Naive thymus-derived CD4-positive, alpha-beta T cell (primary cell): ENCODE measurements at regions of chr1 and their contacts with region 1.

Region 1: GRCh38 chr1:45011837-45012638 is at the start of gene UROD:
- DNase-seq: peak; percentile 61 to 94 (median 89)
- ATAC-seq: peak; percentile 93
- H3K4me3 ChIP-seq: peak within 1 kb of the TSS; percentile 65
- H3K4me3 Mint-ChIP-seq: peak within 1 kb of the TSS; percentile 90 to 100 (median 93)
- H3K27ac ChIP-seq: peak within 1 kb of the TSS; percentile 81
- H3K27ac Mint-ChIP-seq: peak within 1 kb of the TSS; percentile 89 to 98 (median 94)
- H3K4me1 ChIP-seq: peaks cover 28 to 30% of the 10 kb centered on the region in 2 donors
- H3K4me1 Mint-ChIP-seq: peaks cover 29 to 64% (median 57%) of the 10 kb centered on the region in 7 donors
- H3K27me3 ChIP-seq: no peaks in the 10 kb centered on the region
- H3K27me3 Mint-ChIP-seq: no peaks in the 10 kb centered on the region
- total RNA-seq, gene UROD: 40.7 to 72.8 (median 58.1) TPM

Region 2: DNA sequence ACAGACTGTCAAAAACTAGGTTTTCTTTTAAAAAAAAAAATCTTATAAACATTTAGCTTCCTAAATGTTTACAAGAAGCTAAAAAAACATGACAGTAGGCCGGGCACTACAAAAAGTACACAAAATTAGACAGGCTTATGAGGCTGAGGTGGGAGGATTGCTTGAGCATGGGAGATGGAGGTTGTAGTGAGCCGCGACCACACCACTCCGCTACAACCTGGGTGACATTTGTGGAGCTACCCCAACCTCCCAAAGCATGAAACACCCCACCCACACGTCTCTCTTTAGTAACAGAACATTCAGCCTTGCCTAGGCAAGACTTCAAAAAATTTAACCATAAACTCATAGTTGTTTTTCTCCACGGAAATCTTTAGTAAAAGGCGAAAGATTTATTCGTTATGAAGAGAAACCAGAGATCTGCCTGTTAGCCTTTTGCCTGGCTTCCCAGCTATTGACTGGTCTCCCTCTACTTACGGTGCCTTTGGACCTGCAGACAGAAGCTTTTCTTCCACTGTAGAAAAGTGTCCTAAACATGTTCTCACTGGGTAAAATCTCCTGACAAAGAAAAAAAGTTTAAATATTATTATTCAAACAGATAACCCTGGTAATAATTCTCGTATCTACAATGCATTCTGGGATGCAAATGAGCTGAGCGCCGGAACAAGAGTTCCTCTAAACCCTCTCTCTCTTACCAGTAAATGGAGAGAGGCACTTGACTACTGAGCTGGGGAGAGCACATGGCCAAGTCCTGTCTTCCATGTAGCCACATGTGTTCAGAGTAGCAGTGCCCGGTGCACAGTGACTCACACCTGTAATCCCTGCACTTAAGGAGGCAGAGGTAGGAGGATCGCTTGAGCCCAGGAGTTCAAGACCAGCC is 290.3 kb before region 1 on chr1:
- CTCF ChIA-PET with region 1: no interaction called
- POLR2A ChIA-PET with region 1: interaction called, 23 read pairs
- intact Hi-C with region 1: no loop called
- DNase-seq: peak in 8 of 9 donors; percentile 62 to 84 (median 72)
- ATAC-seq: peak; percentile 92
- H3K4me3 ChIP-seq: peak overlapping the region; percentile 15
- H3K4me3 Mint-ChIP-seq: peak overlapping the region; percentile 53 to 87 (median 80)
- H3K27ac ChIP-seq: peak overlapping the region; percentile 64
- H3K27ac Mint-ChIP-seq: peak overlapping the region; percentile 74 to 98 (median 95)
- H3K4me1 ChIP-seq: peaks cover 26 to 73% of the 10 kb centered on the region in 2 donors
- H3K4me1 Mint-ChIP-seq: peaks cover 52 to 85% (median 74%) of the 10 kb centered on the region in 7 donors
- H3K27me3 ChIP-seq: no peaks in the 10 kb centered on the region
- H3K27me3 Mint-ChIP-seq: no peaks in the 10 kb centered on the region

Region 3: DNA sequence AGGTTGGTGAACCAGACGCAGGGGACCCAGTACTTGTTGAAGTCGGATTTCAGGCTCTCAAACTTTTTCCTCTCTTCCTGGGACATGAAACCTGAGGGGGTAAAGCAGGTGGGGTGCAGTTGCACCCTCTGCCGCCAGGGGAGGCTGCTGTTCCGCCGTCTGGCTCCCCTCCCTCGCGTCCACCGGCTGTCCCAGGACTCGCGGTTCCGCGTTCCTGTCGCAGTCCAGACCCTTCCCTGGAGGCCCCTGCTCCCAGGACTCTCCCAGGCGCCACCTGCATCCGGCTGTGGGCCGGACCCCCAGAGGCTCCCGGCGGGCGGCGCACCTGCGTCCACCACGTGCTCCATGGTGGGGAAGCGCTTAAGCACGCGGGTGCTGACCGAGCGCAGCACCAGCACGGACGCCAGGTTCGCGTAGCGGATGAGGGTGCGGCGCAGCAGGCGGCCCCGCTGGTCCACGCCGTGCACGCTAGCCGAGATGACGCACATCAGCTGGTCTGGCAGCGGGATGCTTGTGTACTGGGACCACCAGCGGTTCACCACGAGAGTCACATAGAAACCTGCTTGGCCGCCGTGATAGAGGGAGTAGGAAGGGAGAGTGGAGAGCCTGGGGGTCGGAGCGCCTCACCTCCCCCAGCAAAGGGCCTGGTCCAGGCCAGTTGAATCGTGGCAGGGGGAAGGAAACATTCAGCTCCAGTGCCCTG is 225.7 kb before region 1 on chr1:
- CTCF ChIA-PET with region 1: interaction called, 4 read pairs
- POLR2A ChIA-PET with region 1: interaction called, 25 read pairs
- intact Hi-C with region 1: loop called in 1 of 2 experiments (anchors 1 kb)
- DNase-seq: peak; percentile 69 to 85 (median 76)
- ATAC-seq: peak; percentile 90
- H3K4me3 ChIP-seq: peak overlapping the region; percentile 64
- H3K4me3 Mint-ChIP-seq: peak overlapping the region; percentile 60 to 82 (median 75)
- H3K27ac ChIP-seq: peak overlapping the region; percentile 58
- H3K27ac Mint-ChIP-seq: peak overlapping the region in 8 of 9 donors; percentile 51 to 80 (median 72)
- H3K4me1 ChIP-seq: peaks cover 20 to 25% of the 10 kb centered on the region in 2 donors
- H3K4me1 Mint-ChIP-seq: peaks cover 13 to 35% (median 27%) of the 10 kb centered on the region in 7 donors
- H3K27me3 ChIP-seq: no peaks in the 10 kb centered on the region
- H3K27me3 Mint-ChIP-seq: no peaks in the 10 kb centered on the region

Region 4: GRCh38 chr1:44835738-44836675 is 176.0 kb before region 1 on chr1:
- CTCF ChIA-PET with region 1: interaction called, 8 read pairs
- POLR2A ChIA-PET with region 1: no interaction called
- intact Hi-C with region 1: loop called (anchors 2 to 5 kb)
- DNase-seq: peak; percentile 58 to 82 (median 75)
- ATAC-seq: peak; percentile 96
- H3K4me3 ChIP-seq: no peak overlapping the region
- H3K4me3 Mint-ChIP-seq: peak overlapping the region in 9 of 10 donors; percentile 3 to 73 (median 42)
- H3K27ac ChIP-seq: no peak overlapping the region
- H3K27ac Mint-ChIP-seq: peak overlapping the region in 8 of 9 donors; percentile 12 to 81 (median 41)
- H3K4me1 ChIP-seq: no peaks in the 10 kb centered on the region
- H3K4me1 Mint-ChIP-seq: peaks cover 7 to 19% (median 8%) of the 10 kb centered on the region in 7 donors
- H3K27me3 ChIP-seq: no peaks in the 10 kb centered on the region
- H3K27me3 Mint-ChIP-seq: peaks cover under 1 to 9% (median under 1%) of the 10 kb centered on the region in 5 donors

Region 5: GRCh38 chr1:45303582-45304310 is 291.7 kb after region 1 on chr1:
- CTCF ChIA-PET with region 1: interaction called, 255 read pairs
- POLR2A ChIA-PET with region 1: interaction called, 126 read pairs
- intact Hi-C with region 1: loop called (anchors 1 kb)
- DNase-seq: peak; percentile 86 to 96 (median 93)
- ATAC-seq: peak; percentile 94
- H3K4me3 ChIP-seq: peak overlapping the region; percentile 95
- H3K4me3 Mint-ChIP-seq: peak overlapping the region; percentile 89 to 96 (median 92)
- H3K27ac ChIP-seq: peak overlapping the region; percentile 88
- H3K27ac Mint-ChIP-seq: peak overlapping the region; percentile 90 to 97 (median 95)
- H3K4me1 ChIP-seq: peaks cover 7 to 9% of the 10 kb centered on the region in 2 donors
- H3K4me1 Mint-ChIP-seq: peaks cover 6 to 32% (median 26%) of the 10 kb centered on the region in 7 donors
- H3K27me3 ChIP-seq: no peaks in the 10 kb centered on the region
- H3K27me3 Mint-ChIP-seq: no peaks in the 10 kb centered on the region

Region 6: DNA sequence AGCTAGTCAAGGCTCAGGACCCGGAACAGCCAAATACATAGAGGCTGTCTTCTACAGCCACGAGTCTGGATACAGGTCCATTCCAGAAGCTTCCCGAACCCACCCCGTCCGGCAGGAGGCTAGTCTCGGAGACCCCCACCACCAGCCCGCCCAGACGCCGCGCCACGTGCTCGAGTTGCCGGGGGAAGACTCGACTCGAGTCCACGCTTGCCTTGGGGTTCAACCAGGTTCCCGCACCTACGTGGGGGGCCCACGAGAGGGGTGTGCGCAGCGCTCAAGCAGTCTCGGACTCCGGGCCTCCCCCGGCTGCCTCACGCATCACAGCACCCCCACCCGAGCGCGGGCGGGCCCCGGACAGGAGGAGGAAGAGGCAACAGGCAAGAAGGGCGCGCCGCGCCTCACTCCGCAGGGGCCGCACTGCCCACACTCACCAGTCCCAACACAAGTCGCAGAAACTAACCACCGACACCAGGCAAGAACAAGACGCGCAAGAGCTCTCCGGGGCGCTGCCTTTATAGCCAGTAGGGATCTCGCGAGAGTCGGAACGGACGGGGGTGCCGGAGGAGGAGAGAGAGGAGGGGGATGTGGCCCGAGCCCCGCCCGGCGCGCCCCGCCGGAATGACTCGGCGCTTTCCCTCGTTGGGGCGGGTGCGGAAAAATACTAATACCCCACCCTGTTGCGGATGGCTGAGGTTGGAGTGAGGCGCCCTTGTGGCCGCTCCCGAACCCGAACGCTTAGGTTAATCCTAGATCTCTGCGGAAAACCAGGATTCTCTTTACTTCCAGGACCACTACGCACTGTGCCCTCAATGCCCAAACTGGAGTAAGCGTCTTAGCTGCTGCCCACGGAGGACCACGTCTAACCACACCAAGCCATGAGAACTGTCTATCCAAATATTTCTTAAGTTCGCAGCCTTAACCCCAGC is 509.6 kb after region 1 on chr1 and contains the start of gene PRDX1:
- CTCF ChIA-PET with region 1: no interaction called
- POLR2A ChIA-PET with region 1: interaction called, 10 read pairs
- intact Hi-C with region 1: no loop called
- DNase-seq: peak; percentile 91 to 99 (median 93)
- ATAC-seq: peak; percentile 95
- H3K4me3 ChIP-seq: peak within 1 kb of the TSS; percentile 94
- H3K4me3 Mint-ChIP-seq: peak within 1 kb of the TSS; percentile 90 to 99 (median 94)
- H3K27ac ChIP-seq: peak within 1 kb of the TSS; percentile 87
- H3K27ac Mint-ChIP-seq: peak within 1 kb of the TSS; percentile 83 to 96 (median 91)
- H3K4me1 ChIP-seq: peaks cover 7 to 8% of the 10 kb centered on the region in 2 donors
- H3K4me1 Mint-ChIP-seq: peaks cover 14 to 56% (median 32%) of the 10 kb centered on the region in 7 donors
- H3K27me3 ChIP-seq: no peaks in the 10 kb centered on the region
- H3K27me3 Mint-ChIP-seq: peaks cover 0 to 12% (median 0%) of the 10 kb centered on the region in 5 donors
- total RNA-seq, gene PRDX1: 28.8 to 369 (median 96.3) TPM

Region 7: DNA sequence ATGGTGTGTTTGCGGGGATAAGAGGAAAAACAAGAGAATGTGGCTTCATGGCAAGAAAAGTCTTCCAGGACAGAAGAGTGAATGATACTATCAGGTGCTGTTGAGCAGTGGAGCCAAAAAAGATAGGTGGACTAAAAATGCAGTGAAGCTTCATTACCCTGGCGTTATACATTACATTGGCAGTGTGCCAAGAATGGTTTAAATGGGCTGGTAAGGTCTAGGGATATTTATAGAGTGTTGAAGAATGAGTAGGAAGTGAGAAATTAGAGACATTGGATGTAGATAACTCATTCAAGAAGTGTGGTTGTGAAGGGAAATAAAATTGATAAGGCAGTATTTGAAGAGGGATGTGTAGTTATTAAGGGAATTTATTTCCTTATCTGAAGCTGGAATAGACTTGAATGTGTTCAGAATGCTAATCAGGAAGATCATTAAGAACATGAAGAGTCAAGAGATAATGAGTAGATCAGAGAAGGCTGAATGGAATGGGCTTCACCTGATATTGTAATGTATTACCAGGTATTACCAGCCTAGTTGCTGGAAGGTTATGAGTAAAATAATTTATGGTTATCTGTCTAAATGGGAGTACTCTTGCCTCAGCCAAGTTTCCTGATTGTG is 864.1 kb after region 1 on chr1:
- CTCF ChIA-PET with region 1: no interaction called
- POLR2A ChIA-PET with region 1: no interaction called
- intact Hi-C with region 1: no loop called
- DNase-seq: no peak
- ATAC-seq: no peak
- H3K4me3 ChIP-seq: no peak overlapping the region
- H3K4me3 Mint-ChIP-seq: no peak overlapping the region
- H3K27ac ChIP-seq: no peak overlapping the region
- H3K27ac Mint-ChIP-seq: no peak overlapping the region
- H3K4me1 ChIP-seq: no peaks in the 10 kb centered on the region
- H3K4me1 Mint-ChIP-seq: no peaks in the 10 kb centered on the region
- H3K27me3 ChIP-seq: no peaks in the 10 kb centered on the region
- H3K27me3 Mint-ChIP-seq: no peaks in the 10 kb centered on the region